ENCODE measurements at regions of chr15 and their contacts with region 1.

Region 1: DNA sequence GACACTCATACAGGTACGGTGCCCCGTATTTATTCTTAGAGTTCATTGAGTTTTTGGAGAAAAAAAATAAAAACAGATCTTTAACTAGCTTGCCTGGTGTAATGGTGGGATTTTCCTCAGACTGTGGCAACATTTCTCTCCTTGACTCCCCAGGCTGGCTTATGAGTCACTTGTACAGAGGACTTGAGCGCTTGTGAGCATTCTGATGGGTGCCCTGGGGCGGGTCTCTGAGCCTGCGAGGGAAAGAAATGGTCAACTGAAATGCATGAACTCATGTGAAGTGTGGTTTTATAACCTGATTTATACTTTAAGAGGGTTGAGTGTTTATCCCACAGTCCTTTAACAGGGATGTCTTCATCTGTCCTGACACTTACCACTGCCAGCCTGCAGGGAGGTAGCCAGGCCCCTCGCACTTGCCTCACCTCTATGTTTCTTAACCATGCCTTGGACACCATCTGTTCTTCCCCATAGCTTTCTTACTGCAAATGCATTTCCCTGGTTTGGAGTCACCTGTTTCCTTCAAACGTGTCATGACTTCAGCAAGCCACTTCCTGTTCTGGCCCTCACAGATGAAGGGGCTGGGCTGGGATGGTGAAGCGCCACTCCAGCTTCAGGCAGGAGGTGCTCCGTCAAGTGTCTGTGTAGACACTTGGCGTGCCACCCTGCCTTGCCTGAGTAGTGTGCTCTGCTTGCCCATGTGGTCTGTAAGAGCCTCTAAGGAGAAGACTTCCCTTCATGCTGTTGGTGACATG is 118.7 kb downstream of the PDE8A start:
- DNase-seq: no peak
- H3K4me3 ChIP-seq: no peak overlapping the region
- H3K27ac ChIP-seq: no peak overlapping the region
- H3K4me1 ChIP-seq: no peaks in the 10 kb centered on the region
- H3K27me3 ChIP-seq: no peaks in the 10 kb centered on the region
- CTCF ChIP-seq: no peak

Region 2: DNA sequence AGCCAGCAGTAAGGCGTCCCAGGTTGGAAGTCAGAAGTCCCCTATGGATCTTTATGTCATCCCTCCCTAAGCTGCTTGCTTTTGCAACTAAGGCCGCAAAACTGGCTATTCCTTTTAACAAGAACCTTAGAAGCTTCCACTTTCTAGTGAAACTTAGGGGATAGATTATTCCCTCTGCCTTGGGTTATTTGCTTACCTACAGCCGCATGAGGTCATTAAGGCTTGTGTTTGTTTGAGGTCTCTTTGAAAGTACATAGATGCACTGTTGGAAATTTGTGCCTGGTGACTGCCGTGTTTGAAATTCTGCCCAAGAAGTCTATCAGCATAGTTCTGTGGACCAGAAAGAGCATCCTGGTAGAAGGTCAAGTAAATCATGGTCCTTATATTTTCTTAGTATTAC is 20.0 kb before region 1 on chr15:
- CTCF ChIA-PET with region 1: no interaction called
- POLR2A ChIA-PET with region 1: no interaction called
- intact Hi-C with region 1: loop called (anchors 1 kb)
- DNase-seq: no peak
- H3K4me3 ChIP-seq: no peak overlapping the region
- H3K27ac ChIP-seq: no peak overlapping the region
- H3K4me1 ChIP-seq: no peaks in the 10 kb centered on the region
- H3K27me3 ChIP-seq: no peaks in the 10 kb centered on the region
- CTCF ChIP-seq: no peak